ENCODE measurements at regions of chr11 and their contacts with region 1.

Region 1: DNA sequence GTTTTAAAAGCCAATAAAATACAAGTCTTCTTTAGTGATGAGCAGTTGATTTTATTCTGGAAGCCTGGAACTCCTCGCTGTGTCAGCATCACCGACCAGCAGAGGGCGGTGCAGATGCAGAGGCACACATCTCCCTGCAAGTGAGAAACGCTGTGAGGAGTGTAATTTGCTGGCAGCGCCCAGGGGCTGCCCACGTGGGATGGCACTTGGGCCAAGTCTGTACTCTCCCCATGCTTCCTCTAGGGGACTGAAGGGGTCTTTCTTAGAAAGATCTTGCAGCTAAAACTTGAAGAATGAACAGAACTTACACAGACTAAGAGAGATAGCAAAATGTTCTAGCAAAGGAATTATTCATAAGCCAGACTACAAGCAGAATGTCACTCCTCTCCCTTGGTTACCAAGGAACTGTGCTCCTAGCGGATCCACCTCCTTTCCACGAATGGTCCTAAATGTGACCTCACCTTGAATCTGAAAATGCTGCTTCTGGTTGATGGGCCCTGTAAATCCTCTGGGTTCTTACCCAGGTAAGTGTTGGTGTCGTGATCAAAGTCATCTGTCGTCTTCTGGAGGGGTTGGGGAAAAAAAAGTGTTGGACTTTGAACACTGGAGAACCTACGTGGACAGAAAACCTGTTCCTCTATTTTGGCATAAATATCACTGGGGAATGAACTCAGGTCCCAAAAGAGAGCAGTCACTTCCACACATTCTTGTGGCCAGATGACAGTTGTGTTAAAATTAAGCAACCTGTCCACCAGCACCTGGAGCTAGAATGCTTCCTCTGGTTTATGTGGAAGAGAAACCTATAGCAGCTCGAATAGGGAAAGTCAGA is 31.8 kb downstream of the CNTF start:
- DNase-seq: peak; percentile 81
- H3K4me3 ChIP-seq: no peak overlapping the region
- H3K27ac ChIP-seq: no peak overlapping the region
- H3K4me1 ChIP-seq: no peaks in the 10 kb centered on the region
- CTCF ChIP-seq: peak; percentile 96

Region 2: GRCh38 chr11:58788355-58789023 is 134.2 kb after region 1 on chr11:
- CTCF ChIA-PET with region 1: no interaction called
- POLR2A ChIA-PET with region 1: no interaction called
- intact Hi-C with region 1: loop called (anchors 5 kb)
- DNase-seq: peak; percentile 66
- H3K4me3 ChIP-seq: no peak overlapping the region
- H3K27ac ChIP-seq: no peak overlapping the region
- H3K4me1 ChIP-seq: no peaks in the 10 kb centered on the region
- CTCF ChIP-seq: peak; percentile 92

Region 3: DNA sequence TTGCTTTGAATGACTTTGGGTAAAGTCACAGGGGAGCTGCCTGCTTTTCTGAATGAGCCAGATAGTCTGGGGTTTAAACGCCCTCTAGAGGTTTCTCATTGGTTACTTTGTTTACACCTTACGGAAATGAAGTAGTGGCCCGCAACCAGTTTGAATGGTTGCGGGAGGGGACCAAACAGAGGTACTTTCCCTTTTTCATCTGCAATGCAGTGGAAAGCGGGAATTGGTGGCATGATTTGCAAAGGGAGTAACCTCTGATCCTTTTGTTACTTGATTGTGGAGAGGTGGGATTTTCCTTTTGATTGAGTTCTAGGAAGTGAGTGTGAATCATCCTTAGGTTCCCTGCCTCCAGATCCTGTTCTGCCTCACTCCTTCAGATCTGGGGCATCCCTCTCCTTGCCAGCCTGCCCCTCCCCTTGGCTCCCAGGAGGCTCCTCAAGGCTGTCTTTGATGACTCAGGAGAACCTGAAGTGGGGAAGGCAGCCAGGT is 269.1 kb after region 1 on chr11:
- CTCF ChIA-PET with region 1: no interaction called
- POLR2A ChIA-PET with region 1: no interaction called
- intact Hi-C with region 1: loop called (anchors 10 kb)
- DNase-seq: peak; percentile 67
- H3K4me3 ChIP-seq: no peak overlapping the region
- H3K27ac ChIP-seq: no peak overlapping the region
- H3K4me1 ChIP-seq: no peaks in the 10 kb centered on the region
- CTCF ChIP-seq: peak; percentile 77

Measured in OCI-LY7 (cell line).